Activated CD8-positive, alpha-beta T cell treated with anti-CD3 and anti-CD28 coated beads for 36 hours (primary cell): ENCODE measurements at regions of chr19 and their contacts with region 1.

Region 1: GRCh38 chr19:29761575-29762232 is 46.6 kb upstream of the C19orf12 start:
- DNase-seq: no peak
- ATAC-seq: no peak
- H3K4me3 Mint-ChIP-seq: no peak overlapping the region
- H3K27ac Mint-ChIP-seq: no peak overlapping the region
- H3K4me1 Mint-ChIP-seq: peaks cover 2% of the 10 kb centered on the region
- H3K27me3 Mint-ChIP-seq: no peaks in the 10 kb centered on the region
- CTCF ChIP-seq: no peak

Region 2: GRCh38 chr19:29724102-29724641 is 37.5 kb before region 1 on chr19:
- CTCF ChIA-PET with region 1: interaction called, 14 read pairs
- POLR2A ChIA-PET with region 1: no interaction called
- intact Hi-C with region 1: no loop called
- DNase-seq: peak; percentile 69
- ATAC-seq: peak; percentile 80
- H3K4me3 Mint-ChIP-seq: peak overlapping the region; percentile 62
- H3K27ac Mint-ChIP-seq: peak overlapping the region; percentile 6
- H3K4me1 Mint-ChIP-seq: peaks cover 15% of the 10 kb centered on the region
- H3K27me3 Mint-ChIP-seq: peaks cover 3% of the 10 kb centered on the region
- CTCF ChIP-seq: no peak

Region 3: DNA sequence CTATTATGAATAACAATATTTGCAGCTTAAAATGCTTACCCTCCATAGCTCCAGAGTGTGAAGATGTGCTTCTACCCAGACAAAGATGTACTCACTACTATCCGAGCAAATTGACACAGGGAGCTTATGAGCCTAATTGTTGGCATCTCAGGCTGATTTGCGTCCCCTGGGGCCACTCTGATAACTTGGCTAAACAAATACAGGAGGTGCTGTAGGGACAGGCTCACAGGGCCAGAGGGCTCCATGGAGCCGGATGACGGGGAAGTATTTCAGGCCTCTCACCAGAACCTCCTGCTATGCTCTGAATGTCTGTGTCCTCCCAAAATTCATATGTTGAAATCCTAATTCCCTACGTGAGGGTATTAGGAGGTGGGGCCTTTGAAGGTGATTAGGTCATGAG is 19.9 kb before region 1 on chr19:
- CTCF ChIA-PET with region 1: interaction called, 11 read pairs
- POLR2A ChIA-PET with region 1: no interaction called
- intact Hi-C with region 1: no loop called
- DNase-seq: no peak
- ATAC-seq: no peak
- H3K4me3 Mint-ChIP-seq: no peak overlapping the region
- H3K27ac Mint-ChIP-seq: no peak overlapping the region
- H3K4me1 Mint-ChIP-seq: no peaks in the 10 kb centered on the region
- H3K27me3 Mint-ChIP-seq: no peaks in the 10 kb centered on the region
- CTCF ChIP-seq: no peak

Region 4: GRCh38 chr19:29771708-29772414 is 10.2 kb after region 1 on chr19:
- CTCF ChIA-PET with region 1: interaction called, 33 read pairs
- POLR2A ChIA-PET with region 1: no interaction called
- intact Hi-C with region 1: no loop called
- DNase-seq: peak; percentile 34
- ATAC-seq: no peak
- H3K4me3 Mint-ChIP-seq: no peak overlapping the region
- H3K27ac Mint-ChIP-seq: no peak overlapping the region
- H3K4me1 Mint-ChIP-seq: no peaks in the 10 kb centered on the region
- H3K27me3 Mint-ChIP-seq: peaks cover 2% of the 10 kb centered on the region
- CTCF ChIP-seq: peak; percentile 47

Region 5: GRCh38 chr19:29779921-29780320 is 18.2 kb after region 1 on chr19:
- CTCF ChIA-PET with region 1: interaction called, 10 read pairs
- POLR2A ChIA-PET with region 1: no interaction called
- intact Hi-C with region 1: no loop called
- DNase-seq: peak; percentile 10
- ATAC-seq: no peak
- H3K4me3 Mint-ChIP-seq: no peak overlapping the region
- H3K27ac Mint-ChIP-seq: no peak overlapping the region
- H3K4me1 Mint-ChIP-seq: no peaks in the 10 kb centered on the region
- H3K27me3 Mint-ChIP-seq: no peaks in the 10 kb centered on the region
- CTCF ChIP-seq: no peak